ENCODE measurements at regions of chr6 and their contacts with region 1.

Region 1: DNA sequence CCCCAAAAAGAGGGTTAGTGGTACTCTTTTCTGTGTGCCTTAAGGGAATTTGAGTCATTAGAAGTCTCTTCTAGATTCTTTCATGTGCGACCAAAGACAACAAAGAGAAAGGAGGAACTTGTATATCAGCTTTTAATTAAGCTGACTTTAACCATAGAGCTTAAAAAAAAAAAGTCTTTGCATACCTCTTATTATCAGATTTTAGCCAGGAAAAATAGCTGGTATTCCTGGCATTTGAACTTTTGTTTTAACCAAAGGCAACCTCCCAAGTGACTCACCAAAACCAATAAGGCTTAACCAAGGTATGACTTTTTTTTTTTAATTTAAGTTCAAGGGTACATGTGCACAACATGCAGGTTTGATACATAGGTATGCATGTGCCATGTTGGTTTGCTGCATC is 375.0 kb downstream of the CDC5L start:
- DNase-seq: no peak
- H3K4me3 ChIP-seq: no peak overlapping the region
- H3K27me3 ChIP-seq: no peaks in the 10 kb centered on the region; the same call in 1 of the 2 replicates
- CTCF ChIP-seq: no peak

Region 2: GRCh38 chr6:45112711-45113110 is 350.2 kb after region 1 on chr6:
- CTCF ChIA-PET with region 1: no interaction called
- POLR2A ChIA-PET with region 1: interaction called, 10 read pairs
- DNase-seq: no peak
- H3K4me3 ChIP-seq: no peak overlapping the region
- H3K27me3 ChIP-seq: no peaks in the 10 kb centered on the region
- CTCF ChIP-seq: no peak